ENCODE measurements at regions of chr1 and their contacts with region 1.

Region 1: DNA sequence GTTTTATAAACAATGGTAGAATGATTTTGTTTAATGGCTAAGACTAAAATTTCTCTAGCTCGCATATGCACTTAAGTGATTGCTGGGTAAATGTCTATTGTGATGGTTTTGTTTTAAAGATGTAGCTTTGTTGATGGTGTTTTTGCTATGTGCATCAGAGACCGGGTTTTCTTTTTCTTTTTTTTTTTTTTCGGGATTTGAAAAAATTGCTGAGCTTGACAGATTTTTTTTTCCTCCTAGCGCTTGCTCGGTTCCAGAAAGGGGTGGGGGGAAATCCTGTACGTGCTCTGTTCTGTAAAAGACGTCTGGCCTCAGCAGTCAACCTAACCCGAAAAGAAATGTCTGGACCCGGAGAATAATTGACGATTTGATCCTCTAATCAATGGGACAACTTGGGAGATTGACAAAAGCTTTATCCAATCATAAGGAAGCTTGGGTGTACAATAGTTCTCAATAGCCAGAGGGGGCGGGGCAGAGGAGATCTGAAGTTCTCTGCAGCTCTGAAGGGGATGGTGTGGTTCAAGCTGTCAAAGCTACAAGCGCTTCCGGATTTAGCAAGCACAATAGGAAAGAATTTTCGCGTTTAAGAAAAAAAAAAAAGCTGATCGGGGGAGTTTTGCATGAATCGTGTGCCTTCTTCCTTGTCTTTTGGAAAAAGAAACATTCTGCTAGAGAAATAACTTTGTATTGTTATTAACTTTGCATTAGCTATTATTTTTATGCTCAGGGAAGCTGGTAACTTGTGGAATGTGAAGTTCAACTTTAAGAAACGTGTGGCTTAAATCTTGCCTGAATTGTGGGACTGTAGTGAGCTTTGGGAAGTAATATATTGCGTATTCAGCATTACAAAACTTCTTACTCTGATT is 4.5 kb upstream of the NFIA start:
- DNase-seq: peak; percentile 95
- ATAC-seq: peak; percentile 85
- H3K4me3 Mint-ChIP-seq: peak overlapping the region; percentile 83
- H3K27ac Mint-ChIP-seq: peak overlapping the region; percentile 90
- H3K4me1 Mint-ChIP-seq: peaks cover 49% of the 10 kb centered on the region
- H3K27me3 Mint-ChIP-seq: peaks cover 7% of the 10 kb centered on the region

Region 2: GRCh38 chr1:59692591-59692990 is 1385.3 kb before region 1 on chr1:
- CTCF ChIA-PET with region 1: no interaction called
- POLR2A ChIA-PET with region 1: no interaction called
- intact Hi-C with region 1: no loop called
- DNase-seq: no peak
- ATAC-seq: no peak
- H3K4me3 Mint-ChIP-seq: no peak overlapping the region
- H3K27ac Mint-ChIP-seq: no peak overlapping the region
- H3K4me1 Mint-ChIP-seq: peaks cover 13% of the 10 kb centered on the region
- H3K27me3 Mint-ChIP-seq: no peaks in the 10 kb centered on the region

Region 3: GRCh38 chr1:60994369-60994768 is 83.5 kb before region 1 on chr1:
- CTCF ChIA-PET with region 1: no interaction called
- POLR2A ChIA-PET with region 1: no interaction called
- intact Hi-C with region 1: no loop called
- DNase-seq: no peak
- ATAC-seq: no peak
- H3K4me3 Mint-ChIP-seq: no peak overlapping the region
- H3K27ac Mint-ChIP-seq: no peak overlapping the region
- H3K4me1 Mint-ChIP-seq: no peaks in the 10 kb centered on the region
- H3K27me3 Mint-ChIP-seq: peaks cover 2% of the 10 kb centered on the region

Region 4: DNA sequence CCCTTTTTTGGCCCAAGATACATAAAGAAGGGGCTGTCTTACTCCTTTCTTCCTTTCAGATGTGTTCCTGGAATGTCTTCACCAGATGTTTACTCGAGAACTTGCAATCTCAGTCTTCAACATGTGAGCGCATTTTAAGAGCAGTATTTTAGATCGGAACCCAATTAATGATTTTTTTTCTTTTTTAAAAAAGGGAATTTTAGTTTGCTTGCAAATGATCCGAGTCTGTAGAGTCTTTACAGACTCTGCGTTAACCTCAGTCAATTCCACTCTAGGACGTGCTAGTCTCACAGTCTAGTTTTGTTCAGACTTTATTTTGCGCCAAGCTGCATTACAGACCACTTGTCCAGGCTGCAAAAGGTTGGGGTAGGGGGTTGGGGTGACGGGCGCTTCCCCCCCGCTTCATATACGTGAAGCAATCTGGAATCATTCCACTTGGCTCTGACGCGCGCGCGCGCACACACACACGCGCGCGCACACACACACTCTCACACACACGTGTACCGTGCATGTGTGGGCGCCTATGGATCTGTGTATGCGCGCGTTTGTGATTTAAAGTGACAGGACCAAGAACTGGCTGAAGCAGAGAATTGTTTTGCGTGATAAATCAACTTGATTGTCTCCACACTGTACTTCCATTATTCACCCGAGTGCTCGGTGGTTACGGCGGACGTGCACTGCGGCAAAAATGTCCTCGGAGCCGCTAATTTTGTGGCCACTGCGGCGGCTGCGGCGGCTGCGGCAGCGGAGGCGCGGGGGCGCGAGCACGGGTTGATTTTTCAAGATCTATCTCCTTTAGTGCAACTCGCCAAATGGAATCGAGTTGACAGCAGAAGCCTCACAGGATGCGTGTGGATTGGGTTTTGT is 21.1 kb before region 1 on chr1:
- CTCF ChIA-PET with region 1: interaction called, 60 read pairs
- POLR2A ChIA-PET with region 1: no interaction called
- intact Hi-C with region 1: loop called (anchors 1 kb)
- DNase-seq: peak; percentile 61
- ATAC-seq: peak; percentile 52
- H3K4me3 Mint-ChIP-seq: peak overlapping the region; percentile 76
- H3K27ac Mint-ChIP-seq: peak overlapping the region; percentile 65
- H3K4me1 Mint-ChIP-seq: peaks cover 24% of the 10 kb centered on the region
- H3K27me3 Mint-ChIP-seq: peaks cover 52% of the 10 kb centered on the region

Region 5: GRCh38 chr1:61318319-61319125 is 240.6 kb after region 1 on chr1:
- CTCF ChIA-PET with region 1: no interaction called
- POLR2A ChIA-PET with region 1: no interaction called
- intact Hi-C with region 1: loop called (anchors 5 kb)
- DNase-seq: peak; percentile 46
- ATAC-seq: peak; percentile 93
- H3K4me3 Mint-ChIP-seq: no peak overlapping the region
- H3K27ac Mint-ChIP-seq: peak overlapping the region; percentile 91
- H3K4me1 Mint-ChIP-seq: peaks cover 38% of the 10 kb centered on the region
- H3K27me3 Mint-ChIP-seq: peaks cover 8% of the 10 kb centered on the region

Region 6: GRCh38 chr1:61518670-61519400 is 440.9 kb after region 1 on chr1:
- CTCF ChIA-PET with region 1: no interaction called
- POLR2A ChIA-PET with region 1: no interaction called
- intact Hi-C with region 1: no loop called
- DNase-seq: no peak
- ATAC-seq: no peak
- H3K4me3 Mint-ChIP-seq: no peak overlapping the region
- H3K27ac Mint-ChIP-seq: no peak overlapping the region
- H3K4me1 Mint-ChIP-seq: no peaks in the 10 kb centered on the region
- H3K27me3 Mint-ChIP-seq: peaks cover 4% of the 10 kb centered on the region

Region 7: GRCh38 chr1:61724813-61725694 is 647.1 kb after region 1 on chr1 and contains the start of gene TM2D1:
- CTCF ChIA-PET with region 1: no interaction called
- POLR2A ChIA-PET with region 1: no interaction called
- intact Hi-C with region 1: loop called in 1 of 2 experiments (anchors 2 kb)
- DNase-seq: peak; percentile 92
- ATAC-seq: peak; percentile 93
- H3K4me3 Mint-ChIP-seq: peak within 1 kb of the TSS; percentile 97
- H3K27ac Mint-ChIP-seq: peak within 1 kb of the TSS; percentile 98
- H3K4me1 Mint-ChIP-seq: peaks cover 17% of the 10 kb centered on the region
- H3K27me3 Mint-ChIP-seq: no peaks in the 10 kb centered on the region
- total RNA-seq, gene TM2D1: 20.8 to 26.4 TPM

Region 8: DNA sequence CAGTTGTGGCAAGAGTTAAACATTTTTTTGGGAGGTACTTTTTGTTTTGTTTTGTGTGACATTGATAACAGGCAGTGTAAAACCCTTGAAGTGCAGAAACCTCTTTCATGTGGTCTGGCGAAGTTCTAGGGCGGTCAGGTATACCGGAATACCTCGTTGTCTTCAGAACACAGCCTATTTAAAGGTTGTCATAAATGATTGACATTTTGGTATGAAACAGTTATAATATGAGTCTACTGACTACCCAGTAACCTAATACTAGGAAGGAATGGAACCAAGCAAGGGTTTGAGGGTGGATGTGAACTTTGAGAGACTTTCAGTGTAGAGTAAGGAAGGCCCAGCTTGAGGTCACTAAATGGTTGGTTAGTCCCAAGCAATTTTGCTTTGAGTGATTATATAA is 704.9 kb after region 1 on chr1:
- CTCF ChIA-PET with region 1: interaction called, 3 read pairs
- POLR2A ChIA-PET with region 1: no interaction called
- intact Hi-C with region 1: loop called in 1 of 2 experiments (anchors 5 kb)
- DNase-seq: peak; percentile 79
- ATAC-seq: peak; percentile 94
- H3K4me3 Mint-ChIP-seq: peak overlapping the region; percentile 2
- H3K27ac Mint-ChIP-seq: peak overlapping the region; percentile 65
- H3K4me1 Mint-ChIP-seq: peaks cover 49% of the 10 kb centered on the region
- H3K27me3 Mint-ChIP-seq: no peaks in the 10 kb centered on the region

Region 9: GRCh38 chr1:62783723-62784508 is 1706.0 kb after region 1 on chr1 and contains the start of gene ATG4C:
- CTCF ChIA-PET with region 1: no interaction called
- POLR2A ChIA-PET with region 1: no interaction called
- intact Hi-C with region 1: loop called in 1 of 2 experiments (anchors 10 kb)
- DNase-seq: peak; percentile 96
- ATAC-seq: peak; percentile 99
- H3K4me3 Mint-ChIP-seq: no peak within 1 kb of the TSS
- H3K27ac Mint-ChIP-seq: no peak within 1 kb of the TSS
- H3K4me1 Mint-ChIP-seq: peaks cover 17% of the 10 kb centered on the region
- H3K27me3 Mint-ChIP-seq: peaks cover 10% of the 10 kb centered on the region
- total RNA-seq, gene ATG4C: 16.2 to 17.7 TPM

Measured in activated CD4-positive, alpha-beta T cell treated with anti-CD3 and anti-CD28 coated beads for 36 hours (primary cell).